ENCODE measurements at regions of chr4 and their contacts with region 1.

Region 1: GRCh38 chr4:123661080-123661737 is 264.6 kb downstream of the SPRY1 start:
- DNase-seq: no peak
- ATAC-seq: no peak
- H3K4me3 ChIP-seq: no peak overlapping the region
- H3K27ac ChIP-seq: no peak overlapping the region
- H3K4me1 ChIP-seq: no peaks in the 10 kb centered on the region
- H3K27me3 ChIP-seq: no peaks in the 10 kb centered on the region
- CTCF ChIP-seq: peak in 8 of 9 donors; percentile 34 to 70 (median 55)

Region 2: GRCh38 chr4:123102897-123103471 is 558.2 kb before region 1 on chr4:
- intact Hi-C with region 1: loop called in 3 of 10 experiments (anchors 2 to 10 kb)
- DNase-seq: no peak
- ATAC-seq: peak in 6 of 8 donors; percentile 58 to 78 (median 72)
- H3K4me3 ChIP-seq: no peak overlapping the region
- H3K27ac ChIP-seq: peak overlapping the region in 1 of 10 donors; percentile 16
- H3K4me1 ChIP-seq: peaks cover 0 to 15% (median 4%) of the 10 kb centered on the region in 9 donors
- H3K27me3 ChIP-seq: no peaks in the 10 kb centered on the region
- CTCF ChIP-seq: peak; percentile 44 to 86 (median 78)

Region 3: GRCh38 chr4:123133397-123134050 is 527.7 kb before region 1 on chr4:
- intact Hi-C with region 1: loop called in 6 of 10 experiments (anchors 5 to 10 kb)
- DNase-seq: no peak
- ATAC-seq: no peak
- H3K4me3 ChIP-seq: no peak overlapping the region
- H3K27ac ChIP-seq: no peak overlapping the region
- H3K4me1 ChIP-seq: peaks cover 0 to under 1% (median 0%) of the 10 kb centered on the region in 9 donors
- H3K27me3 ChIP-seq: no peaks in the 10 kb centered on the region
- CTCF ChIP-seq: no peak

Region 4: GRCh38 chr4:123555233-123555806 is 105.9 kb before region 1 on chr4:
- intact Hi-C with region 1: loop called in 3 of 10 experiments (anchors 1 to 10 kb)
- DNase-seq: peak; percentile 75 to 87
- ATAC-seq: peak; percentile 76 to 93 (median 90)
- H3K4me3 ChIP-seq: peak overlapping the region in 2 of 10 donors; percentile 3 to 12
- H3K27ac ChIP-seq: peak overlapping the region; percentile 0 to 79 (median 66)
- H3K4me1 ChIP-seq: peaks cover 0 to 43% (median 27%) of the 10 kb centered on the region in 9 donors
- H3K27me3 ChIP-seq: no peaks in the 10 kb centered on the region
- CTCF ChIP-seq: no peak

Region 5: DNA sequence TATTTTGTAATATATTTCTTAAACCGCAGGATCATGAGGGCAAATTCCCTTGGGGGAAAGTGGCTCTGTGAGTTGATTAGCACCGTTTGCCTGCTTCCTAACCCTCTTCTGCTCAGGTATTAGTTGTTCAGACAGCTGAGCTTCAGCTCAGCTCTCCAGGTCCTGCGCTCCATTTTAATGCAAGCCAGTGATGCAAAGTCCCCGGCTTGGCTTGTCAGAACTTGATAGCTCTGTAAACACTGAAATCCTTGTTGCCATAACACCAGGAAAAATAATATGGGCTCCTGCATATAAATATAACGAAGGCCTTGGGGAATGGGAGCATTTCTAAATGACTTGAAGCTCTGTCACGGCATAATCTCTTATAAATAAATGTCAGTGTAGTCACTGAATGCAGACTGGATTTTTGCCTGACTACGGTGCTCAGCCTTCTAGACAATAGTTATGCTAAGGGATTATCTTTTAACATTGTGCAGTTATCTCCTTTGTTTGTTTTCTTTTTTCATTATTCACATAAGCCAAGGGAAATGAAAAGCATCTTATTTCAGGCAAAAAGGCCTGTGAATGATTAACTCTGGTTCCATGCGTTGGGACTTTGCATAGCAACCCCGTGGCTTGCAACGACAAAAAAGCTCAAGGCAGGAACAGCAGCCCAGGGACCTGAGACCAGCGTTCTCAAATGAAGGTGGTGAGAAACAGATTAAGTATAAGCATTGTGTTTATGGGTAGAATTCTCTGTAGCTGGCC is 11.4 kb before region 1 on chr4:
- intact Hi-C with region 1: loop called in 1 of 10 experiments (anchors 1 kb)
- DNase-seq: peak in 1 of 2 donors; percentile 42
- ATAC-seq: peak; percentile 45 to 86 (median 71)
- H3K4me3 ChIP-seq: peak overlapping the region in 4 of 10 donors; percentile 15 to 30 (median 24)
- H3K27ac ChIP-seq: peak overlapping the region; percentile 28 to 80 (median 65)
- H3K4me1 ChIP-seq: peaks cover 0 to 37% (median 20%) of the 10 kb centered on the region in 9 donors
- H3K27me3 ChIP-seq: no peaks in the 10 kb centered on the region
- CTCF ChIP-seq: no peak